Spleen (tissue), 13 donors: ENCODE measurements at regions of chr2 and their contacts with region 1.

Region 1: DNA sequence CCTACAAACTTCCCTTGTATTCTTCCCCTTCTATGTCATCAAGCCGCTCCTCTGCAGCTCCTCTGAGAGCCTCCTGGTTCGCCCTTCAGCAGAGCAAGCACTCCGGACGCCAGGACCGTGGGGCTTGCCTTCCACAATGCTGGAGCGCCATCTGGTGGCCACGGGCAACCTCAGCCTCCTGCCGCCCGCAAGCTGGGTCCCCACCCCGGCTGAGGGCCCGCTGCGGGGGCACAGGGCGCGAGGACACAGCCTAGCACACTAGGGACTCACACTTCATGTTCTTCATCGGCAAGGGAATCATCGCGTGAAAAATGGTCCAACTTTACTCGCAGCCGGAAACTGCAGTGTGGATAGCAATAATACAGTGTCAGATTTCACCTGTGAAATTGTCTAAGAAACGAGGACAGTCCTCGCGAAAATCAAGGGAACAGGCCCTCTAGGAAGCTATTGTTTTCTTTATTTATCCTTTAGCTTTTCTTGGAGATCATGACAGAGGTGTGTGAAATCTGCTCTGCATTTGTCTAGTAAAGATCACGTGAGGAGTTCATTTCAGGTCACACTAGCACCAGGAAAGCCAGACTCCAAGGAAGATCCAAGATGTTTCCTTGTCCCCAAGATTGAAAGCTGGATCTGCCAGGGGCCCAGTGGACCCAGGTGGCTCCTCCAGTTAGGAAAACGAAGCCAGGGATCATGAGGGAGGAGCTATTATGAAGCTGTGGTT is 5.8 kb downstream of the PRLH start:
- DNase-seq: peak; percentile 96
- H3K4me3 ChIP-seq: no peak overlapping the region
- H3K27ac ChIP-seq: no peak overlapping the region
- H3K4me1 ChIP-seq: peaks cover 0 to 10% (median 7%) of the 10 kb centered on the region in 6 donors
- H3K27me3 ChIP-seq: peaks cover 0 to 41% (median 5%) of the 10 kb centered on the region in 7 donors
- CTCF ChIP-seq: peak; percentile 74 to 97 (median 95)
- POLR2A ChIP-seq: no peak

Region 2: DNA sequence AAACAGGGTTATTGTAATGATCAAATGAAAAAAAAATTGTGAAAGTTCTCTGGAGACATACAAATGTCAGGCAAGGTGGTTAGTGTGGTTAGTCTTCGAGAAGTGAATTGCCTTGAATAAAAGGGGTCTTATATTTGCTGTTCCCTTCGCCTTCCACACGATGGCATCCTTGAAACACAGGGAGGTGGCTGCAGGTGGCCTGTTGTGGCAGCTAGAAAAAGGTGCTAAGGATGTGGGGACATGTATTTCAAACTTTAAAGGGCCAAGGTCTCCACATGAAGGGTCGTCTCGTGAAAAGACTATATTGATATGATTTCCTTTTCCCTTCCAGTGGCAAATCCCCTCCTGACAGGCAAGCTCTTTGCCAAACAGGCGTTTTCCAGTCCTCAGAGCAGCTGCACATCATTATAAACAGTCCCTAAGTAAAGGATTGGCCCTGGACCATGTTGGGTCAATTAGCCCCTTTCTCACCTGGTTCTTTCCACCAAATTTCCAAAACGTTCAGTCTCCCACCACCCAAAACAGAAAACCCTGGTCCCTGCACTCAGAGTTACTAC is 418.0 kb before region 1 on chr2:
- intact Hi-C with region 1: loop called (anchors 10 kb)
- DNase-seq: no peak
- H3K4me3 ChIP-seq: no peak overlapping the region
- H3K27ac ChIP-seq: no peak overlapping the region
- H3K4me1 ChIP-seq: no peaks in the 10 kb centered on the region
- H3K27me3 ChIP-seq: peaks cover 0 to 23% (median 0%) of the 10 kb centered on the region in 7 donors
- CTCF ChIP-seq: peak in 8 of 11 experiments; percentile 10 to 56 (median 49)
- POLR2A ChIP-seq: no peak

Region 3: DNA sequence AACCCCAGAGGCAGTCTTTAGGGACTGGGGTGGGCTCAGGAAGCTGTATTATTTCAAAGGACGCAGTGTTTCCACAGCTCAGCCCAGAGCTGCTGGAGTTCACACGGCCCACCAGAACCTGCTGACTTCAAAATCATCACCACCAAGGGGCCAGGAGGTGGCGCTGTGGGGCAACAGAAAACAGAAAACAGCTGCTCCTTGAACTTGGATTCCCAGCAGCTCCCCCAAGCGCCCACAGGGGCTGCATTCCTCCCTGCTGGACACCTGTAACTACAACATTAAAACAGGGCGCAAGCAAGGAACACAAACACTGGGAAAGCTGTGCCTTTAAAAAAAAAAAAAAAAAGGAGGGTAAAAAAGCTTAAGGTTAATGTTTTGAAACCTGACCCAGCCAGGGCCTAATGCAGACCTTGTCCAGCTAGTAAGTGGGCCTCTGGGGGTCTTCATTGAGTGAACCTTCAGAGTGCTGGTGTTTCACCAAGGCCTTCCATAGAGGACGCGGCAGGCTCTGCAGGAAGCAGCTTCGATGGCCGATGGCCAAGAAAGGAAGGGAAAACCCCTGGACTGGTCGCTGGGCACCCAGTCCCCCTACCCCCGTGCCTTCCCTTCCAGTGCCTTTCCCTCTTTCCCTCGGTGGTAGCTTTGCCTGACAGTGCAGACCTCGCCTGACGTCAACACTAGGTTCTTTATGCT is 59.3 kb before region 1 on chr2:
- intact Hi-C with region 1: loop called (anchors 2 kb)
- DNase-seq: peak; percentile 92
- H3K4me3 ChIP-seq: no peak overlapping the region
- H3K27ac ChIP-seq: no peak overlapping the region
- H3K4me1 ChIP-seq: peaks cover 0 to 16% (median 7%) of the 10 kb centered on the region in 6 donors
- H3K27me3 ChIP-seq: peaks cover 0 to 45% (median 0%) of the 10 kb centered on the region in 7 donors
- CTCF ChIP-seq: peak; percentile 58 to 89 (median 81)
- POLR2A ChIP-seq: no peak

Region 4: DNA sequence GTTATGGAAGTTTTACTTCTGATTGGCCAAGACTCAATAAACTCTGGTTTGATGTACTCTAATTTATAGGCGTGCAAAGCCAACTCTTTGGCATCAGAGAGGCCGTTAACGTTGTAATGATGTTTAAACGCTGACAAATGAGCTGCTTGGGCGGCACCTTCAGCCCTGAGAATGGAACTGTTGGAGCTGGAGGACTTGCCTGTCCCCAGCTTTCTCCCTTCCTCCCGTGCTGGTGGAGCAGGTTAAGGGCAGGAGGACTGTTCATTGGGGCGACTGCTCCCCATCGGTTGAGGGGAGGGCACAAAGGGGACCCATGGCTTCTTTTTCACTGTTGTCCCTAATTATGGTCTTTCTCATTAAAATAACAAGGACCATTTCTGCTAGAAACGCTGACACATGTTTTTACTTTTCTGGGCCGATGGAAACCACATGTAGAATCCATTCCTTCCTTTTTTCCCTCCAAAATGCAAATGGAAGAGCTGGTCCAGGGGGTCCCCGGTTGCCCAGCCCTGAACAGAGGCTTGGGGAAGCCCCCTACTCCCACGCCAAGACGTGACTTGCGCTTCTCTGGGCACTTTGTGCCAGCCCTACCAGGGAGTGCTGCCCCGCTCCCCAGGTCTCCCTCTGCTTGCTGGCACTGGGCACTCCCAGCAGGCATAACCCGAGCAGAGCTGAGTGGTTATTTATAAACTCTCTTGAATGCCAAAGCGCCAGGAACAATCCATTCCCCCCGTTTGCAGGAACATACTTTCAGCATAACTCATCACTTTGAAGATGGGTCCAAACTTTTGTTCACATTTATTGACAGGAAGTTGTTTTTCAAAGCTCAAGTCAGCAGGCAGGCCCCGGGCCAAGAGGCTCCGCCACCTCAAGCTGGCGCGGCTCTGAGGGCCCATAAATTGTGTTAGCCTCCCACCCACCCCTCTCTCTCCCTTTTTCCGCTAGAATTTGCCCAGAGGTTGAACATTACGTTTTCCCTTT is 1024.7 kb after region 1 on chr2:
- intact Hi-C with region 1: no loop called
- DNase-seq: no peak
- H3K4me3 ChIP-seq: no peak overlapping the region
- H3K27ac ChIP-seq: peak overlapping the region in 2 of 8 donors; percentile 3 to 23
- H3K4me1 ChIP-seq: peaks cover 0 to 4% (median 0%) of the 10 kb centered on the region in 6 donors
- H3K27me3 ChIP-seq: peaks cover 0 to 38% (median 0%) of the 10 kb centered on the region in 7 donors
- CTCF ChIP-seq: no peak
- POLR2A ChIP-seq: no peak